ENCODE measurements at regions of chr9 and their contacts with region 1.

Region 1: DNA sequence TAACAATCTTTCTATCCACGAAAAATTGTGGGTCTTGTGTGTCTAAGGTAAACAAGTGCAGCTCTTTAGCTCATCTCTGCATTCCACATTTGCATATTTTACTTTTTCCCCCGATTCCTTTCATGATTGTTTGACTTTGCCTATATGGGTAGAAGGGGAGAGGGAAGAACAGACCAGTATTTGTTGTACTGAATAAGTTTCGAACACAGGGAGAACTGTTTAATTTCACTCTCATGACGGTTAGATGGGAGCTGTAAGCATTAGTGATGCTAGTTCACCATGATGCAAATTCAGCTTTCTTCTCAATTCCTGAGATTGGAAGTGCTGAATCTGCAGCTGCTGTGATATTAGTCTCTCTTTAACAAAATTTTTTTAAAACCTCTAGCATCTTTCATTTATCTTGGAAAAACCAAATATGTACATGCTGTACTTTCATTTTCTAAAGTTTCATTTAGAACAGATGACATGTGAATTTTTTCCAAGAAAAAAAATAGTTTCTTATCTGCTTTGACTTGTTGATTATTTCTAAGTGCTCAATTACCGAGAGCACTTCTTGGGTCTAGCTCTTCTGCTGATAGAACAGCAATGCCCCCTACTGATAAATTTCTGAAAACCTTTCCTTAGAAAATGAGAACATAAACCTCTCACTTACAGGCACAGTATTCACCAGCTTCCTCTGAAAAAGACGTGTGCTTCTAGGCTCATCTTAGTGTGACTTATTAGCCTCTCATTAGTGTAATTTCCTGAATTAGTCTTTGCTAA is 149.5 kb downstream of the BAAT start:
- DNase-seq: peak; percentile 58
- H3K4me3 ChIP-seq: no peak overlapping the region
- H3K27ac ChIP-seq: no peak overlapping the region
- H3K4me1 ChIP-seq: no peaks in the 10 kb centered on the region
- H3K27me3 ChIP-seq: no peaks in the 10 kb centered on the region
- CTCF ChIP-seq: peak; percentile 14 to 38
- POLR2A ChIP-seq: no peak

Region 2: GRCh38 chr9:100700689-100701318 is 534.5 kb before region 1 on chr9:
- CTCF ChIA-PET with region 1: interaction called, 32 read pairs
- POLR2A ChIA-PET with region 1: no interaction called
- dilution Hi-C with region 1: no loop called
- intact Hi-C with region 1: loop called (anchors 1 kb)
- DNase-seq: peak; percentile 38
- H3K4me3 ChIP-seq: no peak overlapping the region
- H3K27ac ChIP-seq: no peak overlapping the region
- H3K4me1 ChIP-seq: no peaks in the 10 kb centered on the region
- H3K27me3 ChIP-seq: no peaks in the 10 kb centered on the region
- CTCF ChIP-seq: peak; percentile 42 to 54
- POLR2A ChIP-seq: no peak

Region 3: GRCh38 chr9:100714372-100715099 is 520.8 kb before region 1 on chr9:
- CTCF ChIA-PET with region 1: interaction called, 103 read pairs
- POLR2A ChIA-PET with region 1: no interaction called
- dilution Hi-C with region 1: no loop called
- intact Hi-C with region 1: loop called (anchors 1 kb)
- DNase-seq: peak; percentile 57
- H3K4me3 ChIP-seq: no peak overlapping the region
- H3K27ac ChIP-seq: no peak overlapping the region
- H3K4me1 ChIP-seq: no peaks in the 10 kb centered on the region
- H3K27me3 ChIP-seq: no peaks in the 10 kb centered on the region
- CTCF ChIP-seq: peak; percentile 80 to 81
- POLR2A ChIP-seq: no peak

Region 4: GRCh38 chr9:101246691-101247090 is 11.4 kb after region 1 on chr9:
- CTCF ChIA-PET with region 1: interaction called, 21 read pairs
- POLR2A ChIA-PET with region 1: no interaction called
- dilution Hi-C with region 1: no loop called
- intact Hi-C with region 1: no loop called
- DNase-seq: no peak
- H3K4me3 ChIP-seq: no peak overlapping the region
- H3K27ac ChIP-seq: no peak overlapping the region
- H3K4me1 ChIP-seq: no peaks in the 10 kb centered on the region
- H3K27me3 ChIP-seq: no peaks in the 10 kb centered on the region
- CTCF ChIP-seq: no peak
- POLR2A ChIP-seq: no peak